CD4-positive, alpha-beta memory T cell (primary cell): ENCODE measurements at regions of chr14 and their contacts with region 1.

Region 1: GRCh38 chr14:23006544-23007419 is 3.2 kb downstream of the C14orf93 start:
- DNase-seq: peak; percentile 99
- H3K4me3 ChIP-seq: peak overlapping the region; percentile 96
- H3K4me3 Mint-ChIP-seq: peak overlapping the region; percentile 94 to 99 (median 97)
- H3K27ac ChIP-seq: peak overlapping the region; percentile 80
- H3K27ac Mint-ChIP-seq: peak overlapping the region; percentile 90 to 99 (median 97)
- H3K4me1 ChIP-seq: peaks cover 37% of the 10 kb centered on the region
- H3K4me1 Mint-ChIP-seq: peaks cover 17 to 52% (median 34%) of the 10 kb centered on the region in 4 donors
- H3K27me3 ChIP-seq: no peaks in the 10 kb centered on the region
- H3K27me3 Mint-ChIP-seq: no peaks in the 10 kb centered on the region

Region 2: GRCh38 chr14:22918804-22919600 is 87.8 kb before region 1 on chr14 and contains the start of gene RBM23:
- CTCF ChIA-PET with region 1: no interaction called
- POLR2A ChIA-PET with region 1: interaction called, 22 read pairs
- intact Hi-C with region 1: no loop called
- DNase-seq: peak; percentile 99 to 100 (median 100)
- H3K4me3 ChIP-seq: peak within 1 kb of the TSS; percentile 67 to 93
- H3K4me3 Mint-ChIP-seq: peak within 1 kb of the TSS; percentile 94 to 99 (median 96)
- H3K27ac ChIP-seq: peak within 1 kb of the TSS; percentile 98
- H3K27ac Mint-ChIP-seq: peak within 1 kb of the TSS; percentile 99 to 100 (median 100)
- H3K4me1 ChIP-seq: peaks cover 40% of the 10 kb centered on the region
- H3K4me1 Mint-ChIP-seq: peaks cover 13 to 56% (median 33%) of the 10 kb centered on the region in 4 donors
- H3K27me3 ChIP-seq: no peaks in the 10 kb centered on the region
- H3K27me3 Mint-ChIP-seq: peaks cover 0 to 4% of the 10 kb centered on the region in 2 donors
- total RNA-seq, gene RBM23: 119 to 123 TPM

Region 3: DNA sequence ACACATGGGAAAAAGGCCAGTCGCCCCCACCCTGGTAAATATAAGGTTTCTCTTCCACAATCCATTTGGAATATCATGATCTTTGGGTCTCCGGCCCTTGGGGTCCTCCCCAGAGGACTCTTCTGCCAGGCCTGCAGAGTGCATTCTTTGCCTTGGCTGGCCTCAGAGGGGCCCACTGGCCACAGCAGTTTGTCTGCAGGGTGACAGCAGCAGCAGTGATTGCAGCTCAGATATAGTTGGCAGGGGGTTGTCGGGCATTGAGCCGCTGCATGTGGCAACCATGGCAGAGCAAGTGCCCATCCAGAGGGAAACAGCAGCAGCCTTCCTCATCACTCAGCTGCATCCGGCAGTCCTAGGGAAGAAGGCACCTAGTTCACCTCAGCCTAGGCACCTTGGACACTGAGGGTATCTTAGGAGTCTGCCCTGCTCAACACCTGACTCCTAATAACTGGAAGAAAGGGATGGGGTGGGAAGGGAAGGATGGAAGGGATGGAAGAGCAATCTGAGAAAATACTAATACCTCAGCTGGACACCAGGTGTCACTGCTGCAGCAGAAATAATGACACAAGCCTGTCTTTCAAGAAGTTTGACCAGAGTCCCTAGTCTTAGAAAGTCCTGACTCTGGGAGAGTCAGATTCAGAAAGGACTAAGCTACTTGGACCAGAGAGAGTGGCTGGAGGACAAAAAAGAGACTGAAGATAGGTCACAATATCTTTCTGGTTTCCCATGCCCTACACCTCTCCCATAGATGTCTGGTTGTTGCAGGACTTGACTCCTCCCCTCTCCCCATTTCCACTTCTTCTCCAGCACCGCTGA is 33.4 kb before region 1 on chr14:
- CTCF ChIA-PET with region 1: interaction called, 20 read pairs
- POLR2A ChIA-PET with region 1: interaction called, 3 read pairs
- intact Hi-C with region 1: no loop called
- DNase-seq: peak in 4 of 5 donors; percentile 32 to 46 (median 38)
- H3K4me3 ChIP-seq: no peak overlapping the region
- H3K4me3 Mint-ChIP-seq: no peak overlapping the region
- H3K27ac ChIP-seq: no peak overlapping the region
- H3K27ac Mint-ChIP-seq: no peak overlapping the region
- H3K4me1 ChIP-seq: no peaks in the 10 kb centered on the region
- H3K4me1 Mint-ChIP-seq: no peaks in the 10 kb centered on the region
- H3K27me3 ChIP-seq: no peaks in the 10 kb centered on the region
- H3K27me3 Mint-ChIP-seq: peaks cover 0 to 3% of the 10 kb centered on the region in 2 donors

Region 4: DNA sequence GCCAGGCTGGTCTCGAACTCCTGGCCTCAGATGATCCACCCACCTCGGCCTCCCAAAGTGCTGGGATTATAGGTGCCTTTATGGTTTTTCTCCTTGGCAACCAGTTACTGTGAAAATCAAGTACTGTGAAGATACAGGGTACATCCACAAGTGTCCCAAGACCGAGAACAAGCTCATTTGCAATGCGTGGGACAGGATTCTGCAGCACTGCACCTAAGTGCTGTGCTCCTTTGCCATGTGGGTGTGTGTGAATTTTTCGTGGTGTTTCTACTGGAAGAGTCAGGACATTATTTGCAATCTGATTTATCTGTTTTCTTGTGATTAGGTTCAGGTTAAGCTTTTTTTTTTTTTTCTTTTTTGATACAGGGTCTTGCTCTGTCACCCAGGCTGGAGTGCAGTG is 10.3 kb after region 1 on chr14:
- CTCF ChIA-PET with region 1: interaction called, 5 read pairs
- POLR2A ChIA-PET with region 1: interaction called, 42 read pairs
- intact Hi-C with region 1: no loop called
- DNase-seq: no peak
- H3K4me3 ChIP-seq: no peak overlapping the region
- H3K4me3 Mint-ChIP-seq: no peak overlapping the region
- H3K27ac ChIP-seq: no peak overlapping the region
- H3K27ac Mint-ChIP-seq: no peak overlapping the region
- H3K4me1 ChIP-seq: no peaks in the 10 kb centered on the region
- H3K4me1 Mint-ChIP-seq: peaks cover 0 to 5% (median 1%) of the 10 kb centered on the region in 4 donors
- H3K27me3 ChIP-seq: no peaks in the 10 kb centered on the region
- H3K27me3 Mint-ChIP-seq: no peaks in the 10 kb centered on the region

Region 5: GRCh38 chr14:23034483-23035302 is 27.9 kb after region 1 on chr14 and contains the start of gene PSMB5:
- CTCF ChIA-PET with region 1: interaction called, 17 read pairs
- POLR2A ChIA-PET with region 1: interaction called, 41 read pairs
- intact Hi-C with region 1: loop called (anchors 1 kb)
- DNase-seq: peak; percentile 93 to 96 (median 93)
- H3K4me3 ChIP-seq: peak within 1 kb of the TSS; percentile 66 to 90
- H3K4me3 Mint-ChIP-seq: peak within 1 kb of the TSS; percentile 87 to 98 (median 93)
- H3K27ac ChIP-seq: peak within 1 kb of the TSS; percentile 89
- H3K27ac Mint-ChIP-seq: peak within 1 kb of the TSS; percentile 89 to 99 (median 98)
- H3K4me1 ChIP-seq: peaks cover 19% of the 10 kb centered on the region
- H3K4me1 Mint-ChIP-seq: peaks cover 17 to 43% (median 31%) of the 10 kb centered on the region in 4 donors
- H3K27me3 ChIP-seq: no peaks in the 10 kb centered on the region
- H3K27me3 Mint-ChIP-seq: no peaks in the 10 kb centered on the region
- total RNA-seq, gene PSMB5: 31.4 to 33.6 TPM

Region 6: DNA sequence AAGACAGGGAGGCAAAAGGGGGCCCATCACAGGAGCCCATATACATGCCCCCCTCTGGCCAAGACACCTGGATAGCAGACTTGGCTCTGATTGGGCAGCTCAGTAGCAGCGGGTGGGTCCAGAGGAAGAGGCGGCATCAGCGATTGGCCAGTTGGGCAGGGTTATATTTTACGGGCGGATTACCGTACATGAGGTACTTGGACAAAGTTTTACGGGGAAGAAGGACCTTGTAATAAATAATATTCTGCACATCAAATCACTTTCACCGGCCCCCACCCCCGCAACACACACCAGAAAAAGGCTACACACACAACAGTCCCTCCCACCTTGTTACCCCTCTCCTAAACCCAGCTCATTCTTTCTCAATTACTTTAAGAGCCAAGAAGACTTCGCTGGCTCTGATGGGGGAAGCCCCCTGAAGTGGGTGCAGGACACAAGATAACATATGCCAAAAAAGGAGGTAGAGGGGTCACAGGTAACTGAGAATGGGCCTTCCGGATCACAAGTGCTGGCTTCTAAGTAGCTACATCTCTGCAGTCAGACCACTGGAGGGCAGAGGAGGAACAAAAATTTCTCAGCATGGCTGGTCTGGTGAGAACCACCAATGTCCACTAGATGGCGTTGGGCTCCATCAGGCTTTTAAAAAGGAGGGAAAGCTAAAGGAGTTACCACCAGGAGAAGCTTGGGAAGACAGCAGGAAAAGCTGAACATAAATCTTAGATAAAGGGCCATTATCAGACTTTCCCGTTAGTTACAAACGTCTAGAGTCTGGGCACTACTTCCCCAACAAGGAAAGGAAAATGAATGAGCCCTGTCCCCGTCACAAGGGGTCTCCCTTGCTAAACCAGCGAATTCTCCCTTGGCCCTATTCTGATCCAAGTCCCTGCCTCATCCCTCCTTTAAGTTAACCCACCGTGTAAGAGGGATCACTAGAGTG is 62.0 kb after region 1 on chr14:
- CTCF ChIA-PET with region 1: interaction called, 21 read pairs
- POLR2A ChIA-PET with region 1: interaction called, 8 read pairs
- intact Hi-C with region 1: no loop called
- DNase-seq: peak; percentile 77 to 81 (median 78)
- H3K4me3 ChIP-seq: no peak overlapping the region
- H3K4me3 Mint-ChIP-seq: peak overlapping the region in 7 of 8 donors; percentile 34 to 74 (median 61)
- H3K27ac ChIP-seq: no peak overlapping the region
- H3K27ac Mint-ChIP-seq: peak overlapping the region; percentile 34 to 93 (median 87)
- H3K4me1 ChIP-seq: peaks cover 28% of the 10 kb centered on the region
- H3K4me1 Mint-ChIP-seq: peaks cover 19 to 41% (median 32%) of the 10 kb centered on the region in 4 donors
- H3K27me3 ChIP-seq: no peaks in the 10 kb centered on the region
- H3K27me3 Mint-ChIP-seq: no peaks in the 10 kb centered on the region

Region 7: DNA sequence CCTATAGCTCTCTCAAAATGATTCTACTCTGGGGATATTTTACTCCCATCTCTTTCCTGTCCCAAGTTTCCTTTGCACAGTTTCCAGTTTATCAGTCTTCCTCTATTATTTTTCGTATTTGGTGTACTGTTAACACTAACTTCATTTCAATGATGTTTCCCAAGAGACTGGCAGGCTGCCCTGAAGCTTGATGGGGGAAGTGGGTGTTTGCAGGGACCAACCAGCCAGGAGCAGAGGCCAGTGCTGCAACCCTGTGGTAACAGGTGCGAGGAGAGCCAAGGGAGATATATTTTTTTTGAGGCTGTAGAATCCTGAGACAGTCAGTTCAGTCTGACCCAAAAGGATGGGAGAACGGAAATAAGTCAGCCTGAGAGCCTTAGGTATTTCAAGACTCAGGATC is 124.1 kb after region 1 on chr14:
- CTCF ChIA-PET with region 1: no interaction called
- POLR2A ChIA-PET with region 1: no interaction called
- intact Hi-C with region 1: no loop called
- DNase-seq: no peak
- H3K4me3 ChIP-seq: no peak overlapping the region
- H3K4me3 Mint-ChIP-seq: no peak overlapping the region
- H3K27ac ChIP-seq: no peak overlapping the region
- H3K27ac Mint-ChIP-seq: no peak overlapping the region
- H3K4me1 ChIP-seq: no peaks in the 10 kb centered on the region
- H3K4me1 Mint-ChIP-seq: peaks cover 3 to 7% (median 5%) of the 10 kb centered on the region in 4 donors
- H3K27me3 ChIP-seq: no peaks in the 10 kb centered on the region
- H3K27me3 Mint-ChIP-seq: peaks cover 1 to 8% of the 10 kb centered on the region in 2 donors

Region 8: DNA sequence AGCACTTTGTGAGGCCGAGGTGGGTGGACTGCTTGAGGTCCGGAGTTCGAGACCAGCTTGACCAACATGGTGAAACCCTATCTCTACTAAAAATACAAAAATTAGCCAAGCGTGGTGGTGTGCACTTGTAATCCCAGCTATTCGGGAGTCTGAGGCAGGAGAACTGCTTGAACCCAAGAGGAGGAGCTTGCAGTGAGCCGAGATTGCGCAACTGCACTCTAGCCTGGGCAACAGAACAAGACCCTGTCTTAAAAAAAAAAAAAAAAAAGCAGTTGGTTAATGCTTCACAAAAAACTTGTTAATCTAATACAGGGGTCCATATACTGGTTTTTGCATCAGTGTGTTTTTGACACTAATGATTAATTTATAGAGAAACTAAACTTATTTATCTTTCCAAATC is 195.2 kb after region 1 on chr14:
- CTCF ChIA-PET with region 1: no interaction called
- POLR2A ChIA-PET with region 1: no interaction called
- intact Hi-C with region 1: no loop called
- DNase-seq: no peak
- H3K4me3 ChIP-seq: no peak overlapping the region
- H3K4me3 Mint-ChIP-seq: no peak overlapping the region
- H3K27ac ChIP-seq: no peak overlapping the region
- H3K27ac Mint-ChIP-seq: no peak overlapping the region
- H3K4me1 ChIP-seq: no peaks in the 10 kb centered on the region
- H3K4me1 Mint-ChIP-seq: no peaks in the 10 kb centered on the region
- H3K27me3 ChIP-seq: no peaks in the 10 kb centered on the region
- H3K27me3 Mint-ChIP-seq: peaks cover 4 to 7% of the 10 kb centered on the region in 2 donors